Activated naive CD4-positive, alpha-beta T cell treated with anti-CD3 and anti-CD28 coated beads for 36 hours (primary cell): ENCODE measurements at regions of chr9 and their contacts with region 1.

Region 1: DNA sequence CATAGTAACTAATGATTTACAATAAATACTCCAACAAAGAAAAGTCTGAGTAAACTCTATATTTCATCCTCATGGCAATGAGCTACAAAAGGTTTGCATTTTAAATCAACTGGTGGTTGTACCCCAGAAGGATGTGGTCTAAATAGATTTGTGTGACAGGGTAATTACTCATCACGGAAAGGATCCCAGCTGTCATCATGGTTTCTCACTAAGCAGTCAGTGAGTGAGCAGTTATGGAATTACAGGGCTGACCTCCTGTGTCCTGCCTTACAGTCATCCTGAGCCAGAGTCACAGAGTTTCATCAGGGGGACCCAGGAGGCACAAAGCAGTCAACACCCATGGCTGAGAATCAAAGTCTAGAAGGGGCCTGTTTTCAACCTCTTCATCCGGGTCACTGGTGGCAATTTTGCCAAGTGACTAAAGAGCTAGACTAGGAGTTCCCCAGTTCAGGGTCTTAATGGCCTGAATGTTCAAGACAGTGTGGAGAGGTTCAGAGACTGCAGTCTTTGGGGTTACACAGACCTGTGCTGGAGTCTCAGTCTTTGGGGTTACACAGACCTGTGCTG is 210.7 kb upstream of the SLC24A2 start:
- DNase-seq: peak; percentile 85
- H3K4me3 Mint-ChIP-seq: no peak overlapping the region
- H3K27ac Mint-ChIP-seq: peak overlapping the region; percentile 85
- H3K4me1 Mint-ChIP-seq: peaks cover 43% of the 10 kb centered on the region
- H3K27me3 Mint-ChIP-seq: no peaks in the 10 kb centered on the region

Region 2: GRCh38 chr9:19471737-19472648 is 527.6 kb before region 1 on chr9:
- CTCF ChIA-PET with region 1: no interaction called
- intact Hi-C with region 1: loop called (anchors 1 kb)
- DNase-seq: peak; percentile 77
- H3K4me3 Mint-ChIP-seq: peak overlapping the region; percentile 9
- H3K27ac Mint-ChIP-seq: no peak overlapping the region
- H3K4me1 Mint-ChIP-seq: peaks cover 14% of the 10 kb centered on the region
- H3K27me3 Mint-ChIP-seq: peaks cover 3% of the 10 kb centered on the region

Region 3: DNA sequence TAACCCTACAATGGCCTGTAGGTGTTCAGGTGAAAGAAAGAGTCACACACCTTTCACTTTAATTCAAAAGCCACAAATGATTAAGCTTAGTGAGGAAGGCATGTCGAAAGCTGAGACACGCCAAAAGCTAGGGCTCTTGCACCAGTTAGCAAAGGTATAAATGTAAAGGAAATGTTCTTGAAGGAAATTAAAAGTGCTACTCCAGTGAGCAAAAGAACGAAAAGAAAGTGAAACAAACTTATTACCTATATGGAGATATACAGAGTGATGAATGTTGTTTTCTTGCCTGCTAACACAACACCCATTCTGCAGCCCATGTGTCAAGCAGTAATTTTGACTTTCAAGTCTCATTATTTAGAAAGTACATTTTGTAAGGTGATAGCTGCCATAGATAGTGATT is 43.5 kb after region 1 on chr9:
- CTCF ChIA-PET with region 1: no interaction called
- intact Hi-C with region 1: loop called (anchors 1 kb)
- DNase-seq: peak; percentile 43
- H3K4me3 Mint-ChIP-seq: peak overlapping the region; percentile 32
- H3K27ac Mint-ChIP-seq: no peak overlapping the region
- H3K4me1 Mint-ChIP-seq: peaks cover 20% of the 10 kb centered on the region
- H3K27me3 Mint-ChIP-seq: no peaks in the 10 kb centered on the region

Region 4: DNA sequence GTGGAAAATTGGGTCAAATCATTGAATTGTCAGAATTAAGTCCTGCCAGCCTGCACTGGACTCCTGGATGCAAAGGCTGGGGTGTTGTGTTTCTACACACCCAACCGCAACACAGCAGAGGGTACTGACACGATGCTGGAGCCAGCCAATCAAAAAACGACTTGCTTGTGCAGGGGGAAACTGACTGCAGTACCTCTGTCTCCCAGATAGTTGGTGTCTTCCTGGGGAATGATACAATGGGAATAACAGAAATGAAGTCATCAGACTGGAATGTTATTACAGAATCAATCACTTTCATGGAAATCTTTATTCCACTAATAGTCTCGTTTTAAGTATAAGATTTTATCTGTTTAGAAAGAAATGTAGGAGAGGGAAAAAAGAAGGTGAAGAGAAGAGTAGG is 292.4 kb after region 1 on chr9:
- CTCF ChIA-PET with region 1: no interaction called
- intact Hi-C with region 1: no loop called
- DNase-seq: no peak
- H3K4me3 Mint-ChIP-seq: no peak overlapping the region
- H3K27ac Mint-ChIP-seq: no peak overlapping the region
- H3K4me1 Mint-ChIP-seq: peaks cover 8% of the 10 kb centered on the region
- H3K27me3 Mint-ChIP-seq: no peaks in the 10 kb centered on the region

Region 5: DNA sequence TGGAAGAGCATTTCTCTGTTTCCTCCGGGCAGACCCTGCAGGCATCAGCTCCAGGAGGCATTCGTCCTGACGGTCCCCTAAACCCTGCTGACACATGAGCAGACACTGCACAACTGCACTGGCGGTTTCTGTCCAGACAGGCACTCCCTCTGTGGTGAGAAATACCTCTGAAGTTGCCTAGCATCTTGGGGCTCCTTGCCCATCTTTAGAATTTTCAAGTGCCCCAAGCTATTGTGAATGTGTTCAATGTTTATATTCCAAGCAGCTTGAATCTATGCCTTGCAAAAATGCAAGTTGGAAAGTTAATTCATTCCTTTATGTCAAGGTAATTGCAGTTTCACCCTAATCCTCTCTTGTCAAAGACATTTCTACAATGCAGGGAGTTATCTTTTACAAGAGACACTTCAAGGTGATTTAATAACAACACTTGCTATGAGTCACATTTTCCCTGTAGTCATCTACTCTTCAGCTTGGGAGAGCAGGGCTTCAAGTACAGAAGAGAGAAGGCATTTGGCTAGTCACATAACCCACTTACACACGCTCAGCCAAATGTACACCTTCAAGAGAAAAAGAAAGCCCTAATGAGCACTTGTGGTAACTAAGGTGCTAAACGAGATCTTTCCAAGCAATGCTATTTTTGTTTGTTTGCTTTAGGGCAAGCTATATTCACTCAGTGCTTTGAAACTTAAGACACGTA is 320.2 kb after region 1 on chr9:
- CTCF ChIA-PET with region 1: no interaction called
- intact Hi-C with region 1: loop called (anchors 1 kb)
- DNase-seq: peak; percentile 48
- H3K4me3 Mint-ChIP-seq: no peak overlapping the region
- H3K27ac Mint-ChIP-seq: peak overlapping the region; percentile 86
- H3K4me1 Mint-ChIP-seq: peaks cover 98% of the 10 kb centered on the region
- H3K27me3 Mint-ChIP-seq: no peaks in the 10 kb centered on the region

Region 6: DNA sequence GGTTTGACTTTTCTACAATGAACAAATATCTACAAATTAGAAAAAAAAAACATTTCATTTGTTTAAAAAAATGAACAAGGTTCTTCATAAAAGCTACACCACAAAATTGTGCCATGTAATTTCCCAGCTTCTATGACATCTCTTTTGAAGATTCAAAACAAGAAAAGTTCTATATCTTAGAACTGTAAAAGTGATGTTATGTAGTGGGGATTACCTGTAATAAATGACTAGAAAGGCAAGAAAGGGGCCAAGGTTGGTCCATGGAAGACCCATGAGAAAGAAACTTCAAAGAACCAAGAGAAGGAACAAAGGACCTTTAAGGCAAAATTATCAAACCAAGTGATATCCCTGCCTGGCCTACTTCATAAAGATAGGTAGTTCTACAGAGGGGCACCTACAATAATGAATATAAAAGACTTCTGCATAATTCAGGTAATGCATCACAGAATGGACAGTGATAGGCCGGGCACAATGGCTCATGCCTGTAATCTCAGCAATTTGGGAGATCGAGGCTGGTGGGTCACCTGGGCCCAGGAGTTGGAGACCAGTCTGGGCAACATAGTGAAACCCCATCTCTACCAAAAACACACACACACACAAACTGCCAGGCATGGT is 615.1 kb after region 1 on chr9:
- CTCF ChIA-PET with region 1: no interaction called
- intact Hi-C with region 1: loop called (anchors 2 kb)
- DNase-seq: no peak
- H3K4me3 Mint-ChIP-seq: no peak overlapping the region
- H3K27ac Mint-ChIP-seq: peak overlapping the region; percentile 35
- H3K4me1 Mint-ChIP-seq: peaks cover 72% of the 10 kb centered on the region
- H3K27me3 Mint-ChIP-seq: no peaks in the 10 kb centered on the region

Region 7: DNA sequence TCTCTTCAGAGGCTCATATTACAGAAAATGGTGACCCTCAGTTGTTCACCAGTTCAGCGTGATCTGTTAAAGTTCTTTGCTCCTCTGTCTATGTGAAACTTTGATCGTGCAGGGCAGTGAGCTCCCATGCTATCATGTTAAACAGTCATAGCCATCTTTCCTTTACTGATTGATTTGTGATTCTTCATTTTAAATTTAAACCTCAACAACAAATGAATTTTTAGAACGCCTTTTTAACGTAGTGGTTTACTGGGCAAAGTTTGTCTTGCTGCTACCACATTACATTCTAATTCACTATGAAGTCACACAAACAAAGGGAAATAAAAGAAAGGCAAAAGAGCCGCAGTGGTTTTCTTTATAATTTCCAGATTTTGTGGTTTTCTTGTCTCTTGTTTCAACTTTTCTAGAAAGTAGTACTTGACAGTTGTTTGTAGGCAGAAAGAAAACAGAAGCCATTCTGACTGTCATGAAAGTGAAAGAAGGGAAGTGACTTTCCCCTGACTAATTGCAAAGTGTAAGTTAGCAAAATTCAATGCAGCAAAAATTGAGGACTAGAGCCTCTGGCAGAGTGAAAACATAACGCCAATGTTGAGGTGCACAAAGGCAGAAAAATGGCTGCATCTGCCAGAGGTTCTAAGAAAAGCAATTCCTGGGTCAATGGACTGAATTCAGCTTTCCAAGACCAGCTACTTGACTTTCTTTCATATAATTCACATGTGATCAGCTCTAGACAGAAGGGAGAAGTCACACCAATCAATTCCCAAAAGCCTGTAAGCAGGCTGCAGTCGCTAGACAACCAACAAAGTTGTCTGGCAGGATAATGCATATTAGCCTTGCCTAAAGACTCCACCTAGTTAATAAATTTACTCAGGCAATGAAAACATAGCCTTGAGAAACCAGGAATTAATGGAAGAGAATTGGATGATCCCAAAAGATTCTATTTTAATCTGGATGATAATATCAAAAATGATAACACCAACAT is 1358.2 kb after region 1 on chr9:
- CTCF ChIA-PET with region 1: no interaction called
- intact Hi-C with region 1: loop called (anchors 5 kb)
- DNase-seq: peak; percentile 28
- H3K4me3 Mint-ChIP-seq: peak overlapping the region; percentile 36
- H3K27ac Mint-ChIP-seq: no peak overlapping the region
- H3K4me1 Mint-ChIP-seq: peaks cover 19% of the 10 kb centered on the region
- H3K27me3 Mint-ChIP-seq: peaks cover 13% of the 10 kb centered on the region